Activated CD8-positive, alpha-beta T cell treated with anti-CD3 and anti-CD28 coated beads for 36 hours (primary cell): ENCODE measurements at regions of chr21 and their contacts with region 1.

Region 1: DNA sequence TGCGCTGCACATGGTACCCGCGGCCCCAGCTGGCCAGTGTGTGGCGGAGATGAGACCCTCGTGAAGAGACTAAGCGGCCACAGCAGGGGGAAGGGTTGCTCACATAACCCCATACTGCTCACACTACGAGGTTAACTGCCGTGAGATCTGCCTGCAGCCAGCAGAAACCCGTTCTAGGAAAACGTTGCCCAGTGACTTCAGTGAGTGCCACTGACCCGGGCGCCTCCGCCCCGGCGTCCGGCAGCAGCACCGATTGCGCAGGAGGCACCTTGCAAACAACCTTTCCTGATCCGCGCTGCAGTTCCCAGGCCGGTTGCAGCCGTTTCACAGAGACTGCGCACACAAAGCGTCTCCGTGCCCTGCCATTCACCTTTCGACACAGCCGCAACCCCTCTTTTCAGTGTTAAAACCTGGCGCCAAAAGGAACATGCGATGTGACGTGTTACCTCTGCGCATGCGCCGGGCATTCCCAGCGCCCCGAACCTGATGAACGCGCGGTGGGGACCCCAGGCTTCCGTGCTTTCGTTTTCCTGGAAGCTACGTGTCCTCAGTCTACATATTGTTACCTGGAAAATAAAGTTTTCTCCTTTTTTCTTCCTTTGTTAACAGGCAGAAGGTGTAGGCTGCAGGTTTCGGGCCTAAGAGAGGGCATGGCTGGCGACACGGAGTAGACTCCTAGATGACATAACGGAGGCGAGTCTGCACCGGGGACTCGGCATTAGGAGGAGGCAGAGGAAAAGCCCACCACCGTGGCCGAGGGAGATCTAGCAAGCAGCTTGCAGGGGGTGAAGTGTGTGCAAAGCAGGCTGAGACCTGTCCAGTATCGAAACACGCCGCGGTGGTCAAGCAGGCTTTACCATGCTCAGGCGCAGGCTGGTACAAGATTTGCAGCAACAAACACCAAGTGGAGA is 8.9 kb downstream of the VPS26C start:
- DNase-seq: peak; percentile 92
- ATAC-seq: peak; percentile 84
- H3K4me3 Mint-ChIP-seq: peak overlapping the region; percentile 86
- H3K27ac Mint-ChIP-seq: peak overlapping the region; percentile 96
- H3K4me1 Mint-ChIP-seq: peaks cover 40% of the 10 kb centered on the region
- H3K27me3 Mint-ChIP-seq: no peaks in the 10 kb centered on the region
- CTCF ChIP-seq: no peak

Region 2: DNA sequence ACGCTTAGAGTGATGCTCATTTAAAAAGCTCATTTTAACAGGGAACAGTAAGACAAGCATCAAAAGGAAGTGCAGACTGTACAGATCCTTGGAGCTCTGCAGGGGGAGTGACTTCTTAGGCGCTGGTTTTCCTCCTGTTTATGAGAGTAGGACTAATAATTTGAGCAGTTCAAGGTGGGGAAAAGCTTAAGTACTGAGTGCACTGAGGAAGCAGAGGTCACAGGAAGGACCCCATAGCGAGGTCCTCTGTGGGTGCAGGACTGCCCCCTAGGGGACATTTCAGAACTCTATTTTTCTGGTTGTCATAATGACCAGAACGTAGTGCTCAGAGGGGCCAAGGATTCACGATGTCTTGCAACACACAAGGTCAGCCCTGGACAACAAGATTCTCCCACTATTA is 403.8 kb before region 1 on chr21:
- CTCF ChIA-PET with region 1: no interaction called
- POLR2A ChIA-PET with region 1: no interaction called
- intact Hi-C with region 1: no loop called
- DNase-seq: peak; percentile 57
- ATAC-seq: peak; percentile 70
- H3K4me3 Mint-ChIP-seq: no peak overlapping the region
- H3K27ac Mint-ChIP-seq: no peak overlapping the region
- H3K4me1 Mint-ChIP-seq: peaks cover 11% of the 10 kb centered on the region
- H3K27me3 Mint-ChIP-seq: no peaks in the 10 kb centered on the region
- CTCF ChIP-seq: peak; percentile 62

Region 3: DNA sequence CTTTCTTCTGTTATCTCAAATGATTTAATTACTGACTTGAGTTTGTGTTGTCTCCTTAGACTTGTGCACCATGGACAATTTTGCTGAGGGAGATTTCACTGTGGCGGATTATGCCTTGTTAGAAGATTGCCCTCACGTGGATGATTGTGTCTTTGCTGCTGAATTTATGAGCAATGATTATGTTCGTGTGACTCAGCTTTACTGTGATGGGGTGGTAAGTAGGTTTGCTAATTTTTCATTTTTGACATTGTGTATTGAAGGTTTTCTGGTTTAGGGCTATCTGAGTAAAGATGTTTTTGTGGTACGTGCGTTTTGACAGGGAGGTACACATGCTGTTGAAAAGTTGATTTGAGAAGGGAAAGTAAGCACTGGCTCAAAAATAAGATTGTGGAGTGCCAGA is 171.0 kb before region 1 on chr21:
- CTCF ChIA-PET with region 1: no interaction called
- POLR2A ChIA-PET with region 1: no interaction called
- intact Hi-C with region 1: no loop called
- DNase-seq: peak; percentile 18
- ATAC-seq: no peak
- H3K4me3 Mint-ChIP-seq: no peak overlapping the region
- H3K27ac Mint-ChIP-seq: no peak overlapping the region
- H3K4me1 Mint-ChIP-seq: peaks cover 16% of the 10 kb centered on the region
- H3K27me3 Mint-ChIP-seq: no peaks in the 10 kb centered on the region
- CTCF ChIP-seq: no peak

Region 4: DNA sequence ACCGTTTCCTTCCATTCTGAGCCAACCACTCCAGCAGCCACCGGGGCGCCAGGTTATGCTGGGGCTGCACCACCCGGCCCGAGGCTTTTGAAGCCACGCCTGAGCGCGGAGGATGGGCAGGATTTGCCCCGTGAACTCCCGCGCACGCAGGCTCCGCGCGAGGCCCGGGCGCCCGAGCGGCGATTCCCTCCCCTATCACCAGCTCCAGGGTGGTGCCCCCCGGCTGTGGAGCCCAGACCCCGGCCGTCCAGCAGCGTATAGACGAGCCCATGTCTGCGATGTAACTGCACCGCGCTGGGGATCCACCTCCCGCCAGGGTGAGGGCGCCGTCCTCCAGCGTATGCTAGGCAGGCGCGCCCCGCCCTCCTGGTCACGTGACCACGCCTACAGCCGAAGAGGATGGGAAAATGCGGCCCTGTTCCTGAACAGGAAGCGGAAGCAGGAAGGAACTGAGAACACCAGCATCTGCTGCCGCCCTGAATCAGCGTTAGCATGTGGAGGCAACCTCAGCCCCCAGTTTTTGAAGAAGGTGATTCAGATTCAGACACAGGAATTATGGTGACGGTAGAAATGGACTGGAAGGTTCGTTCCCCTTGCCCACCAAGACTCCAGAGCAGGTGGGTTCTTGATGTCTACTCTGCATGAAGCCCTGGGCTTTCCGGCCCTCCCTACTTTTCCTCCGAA is 37.1 kb before region 1 on chr21:
- CTCF ChIA-PET with region 1: no interaction called
- POLR2A ChIA-PET with region 1: interaction called, 11 read pairs
- intact Hi-C with region 1: loop called (anchors 5 kb)
- DNase-seq: peak; percentile 98
- ATAC-seq: peak; percentile 82
- H3K4me3 Mint-ChIP-seq: peak overlapping the region; percentile 79
- H3K27ac Mint-ChIP-seq: peak overlapping the region; percentile 93
- H3K4me1 Mint-ChIP-seq: peaks cover 53% of the 10 kb centered on the region
- H3K27me3 Mint-ChIP-seq: no peaks in the 10 kb centered on the region
- CTCF ChIP-seq: no peak

Region 5: GRCh38 chr21:37230632-37231232 is 27.5 kb before region 1 on chr21:
- CTCF ChIA-PET with region 1: interaction called, 3 read pairs
- POLR2A ChIA-PET with region 1: interaction called, 11 read pairs
- intact Hi-C with region 1: loop called (anchors 5 kb)
- DNase-seq: no peak
- ATAC-seq: no peak
- H3K4me3 Mint-ChIP-seq: no peak overlapping the region
- H3K27ac Mint-ChIP-seq: peak overlapping the region; percentile 54
- H3K4me1 Mint-ChIP-seq: peaks cover 21% of the 10 kb centered on the region
- H3K27me3 Mint-ChIP-seq: no peaks in the 10 kb centered on the region
- CTCF ChIP-seq: no peak

Region 6: DNA sequence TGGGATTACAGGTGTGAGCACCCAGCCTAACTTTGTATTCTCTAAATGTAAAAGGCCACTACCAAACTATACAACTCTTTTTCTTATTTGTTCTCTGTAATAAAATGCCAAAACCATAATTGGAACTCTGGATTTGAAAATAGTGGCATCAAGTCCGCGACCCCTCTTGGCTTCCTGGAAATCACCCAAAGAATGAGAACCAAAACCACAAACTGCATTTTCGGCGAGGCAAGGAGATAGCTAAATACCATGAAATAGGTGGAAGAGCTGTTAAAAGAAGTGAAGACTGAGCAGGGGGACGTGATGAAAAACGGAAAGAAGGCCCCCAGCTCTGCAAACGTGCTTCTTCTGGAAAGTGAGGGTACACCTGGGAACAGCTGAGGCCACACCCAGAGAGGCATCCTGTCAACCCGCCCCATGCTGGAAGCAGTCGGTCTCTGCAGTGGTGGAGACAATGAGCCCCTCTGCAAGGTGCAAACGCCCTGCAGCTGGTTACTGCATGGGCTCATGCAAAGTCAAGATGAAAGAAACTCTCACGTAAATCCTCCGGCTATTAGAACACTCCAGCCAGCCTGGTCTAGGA is 13.6 kb before region 1 on chr21:
- CTCF ChIA-PET with region 1: interaction called, 14 read pairs
- POLR2A ChIA-PET with region 1: interaction called, 45 read pairs
- intact Hi-C with region 1: no loop called
- DNase-seq: peak; percentile 69
- ATAC-seq: peak; percentile 90
- H3K4me3 Mint-ChIP-seq: peak overlapping the region; percentile 64
- H3K27ac Mint-ChIP-seq: peak overlapping the region; percentile 91
- H3K4me1 Mint-ChIP-seq: peaks cover 59% of the 10 kb centered on the region
- H3K27me3 Mint-ChIP-seq: no peaks in the 10 kb centered on the region
- CTCF ChIP-seq: no peak

Region 7: GRCh38 chr21:37407719-37408420 is 149.6 kb after region 1 on chr21:
- CTCF ChIA-PET with region 1: no interaction called
- POLR2A ChIA-PET with region 1: no interaction called
- intact Hi-C with region 1: no loop called
- DNase-seq: no peak
- ATAC-seq: peak; percentile 70
- H3K4me3 Mint-ChIP-seq: peak overlapping the region; percentile 18
- H3K27ac Mint-ChIP-seq: peak overlapping the region; percentile 68
- H3K4me1 Mint-ChIP-seq: peaks cover 80% of the 10 kb centered on the region
- H3K27me3 Mint-ChIP-seq: no peaks in the 10 kb centered on the region
- CTCF ChIP-seq: no peak